ENCODE measurements at regions of chr18 and their contacts with region 1.

Region 1: GRCh38 chr18:8654503-8655451 is 45.5 kb downstream of the RAB12 start:
- DNase-seq: no peak
- H3K4me3 Mint-ChIP-seq: no peak overlapping the region
- H3K27ac Mint-ChIP-seq: no peak overlapping the region
- H3K4me1 Mint-ChIP-seq: no peaks in the 10 kb centered on the region
- H3K27me3 Mint-ChIP-seq: peaks cover 22% of the 10 kb centered on the region

Region 2: DNA sequence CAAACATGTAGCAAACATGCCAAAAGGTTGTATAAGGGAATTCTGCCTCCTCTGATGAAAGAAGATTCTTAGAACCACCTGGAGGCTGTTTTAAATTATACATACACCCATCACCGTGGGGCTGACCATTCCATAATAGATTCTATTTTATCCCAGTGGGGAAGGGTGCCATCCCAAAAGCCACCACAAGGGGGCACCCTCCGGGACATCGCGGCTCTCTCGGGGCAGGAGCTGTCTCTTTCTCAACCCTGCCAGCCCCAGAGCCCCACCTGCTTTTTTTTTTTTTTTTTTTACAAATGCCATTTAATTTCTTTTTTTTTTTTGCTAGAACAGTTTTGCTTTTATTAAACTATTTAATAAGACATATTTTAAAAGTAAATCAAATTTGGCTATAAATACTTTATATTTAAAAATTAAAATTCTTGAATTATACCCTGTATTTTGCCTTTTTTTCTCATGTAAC is 42.0 kb after region 1 on chr18:
- intact Hi-C with region 1: loop called (anchors 5 kb)
- DNase-seq: peak; percentile 63
- H3K4me3 Mint-ChIP-seq: no peak overlapping the region
- H3K27ac Mint-ChIP-seq: no peak overlapping the region
- H3K4me1 Mint-ChIP-seq: no peaks in the 10 kb centered on the region
- H3K27me3 Mint-ChIP-seq: peaks cover 25% of the 10 kb centered on the region

Region 3: GRCh38 chr18:9516437-9517064 is 861.8 kb after region 1 on chr18:
- intact Hi-C with region 1: loop called (anchors 1 kb)
- DNase-seq: no peak
- H3K4me3 Mint-ChIP-seq: no peak overlapping the region
- H3K27ac Mint-ChIP-seq: no peak overlapping the region
- H3K4me1 Mint-ChIP-seq: peaks cover 12% of the 10 kb centered on the region
- H3K27me3 Mint-ChIP-seq: no peaks in the 10 kb centered on the region

Measured in activated T-helper 1 cell treated with anti-CD3 and anti-CD28 coated beads, Interleukin-12 subunit alpha, Interleukin-12 subunit beta, Interleukin-2, Interleukin-4 antibody, amounts not matched to agents 30 ng/mL and 10 ng/mL and 1 ng/mL, durations not matched to agents 14 hours and 24 hours and 36 hours (primary cell).